Endothelial cell of umbilical vein (primary cell): ENCODE measurements at regions of chr12 and their contacts with region 1.

Region 1: DNA sequence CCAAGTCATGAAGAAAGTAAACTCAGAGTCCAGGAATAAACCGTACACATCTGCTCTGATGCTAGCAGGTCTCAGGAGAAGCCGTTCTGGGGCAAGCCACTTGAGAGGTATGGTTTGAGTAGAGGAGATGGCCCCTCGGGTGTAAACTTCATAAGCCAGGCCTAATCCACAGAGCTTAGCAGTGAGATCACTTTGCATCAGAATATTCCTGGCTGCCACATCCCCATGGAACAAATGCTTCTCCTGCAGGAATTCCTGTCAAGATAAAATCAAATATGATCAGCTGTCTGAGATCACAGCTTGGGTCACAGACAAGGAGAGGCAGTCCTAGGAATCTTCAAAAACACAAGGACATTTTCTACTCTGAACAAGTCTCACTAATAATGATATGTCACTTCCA is 11.2 kb upstream of the MAGOHB start:
- DNase-seq: no peak
- H3K4me3 ChIP-seq: no peak overlapping the region
- H3K27ac ChIP-seq: no peak overlapping the region
- H3K4me1 ChIP-seq: peaks cover 5% of the 10 kb centered on the region
- H3K27me3 ChIP-seq: no peaks in the 10 kb centered on the region
- CTCF ChIP-seq: no peak
- POLR2A ChIP-seq: no peak

Region 2: DNA sequence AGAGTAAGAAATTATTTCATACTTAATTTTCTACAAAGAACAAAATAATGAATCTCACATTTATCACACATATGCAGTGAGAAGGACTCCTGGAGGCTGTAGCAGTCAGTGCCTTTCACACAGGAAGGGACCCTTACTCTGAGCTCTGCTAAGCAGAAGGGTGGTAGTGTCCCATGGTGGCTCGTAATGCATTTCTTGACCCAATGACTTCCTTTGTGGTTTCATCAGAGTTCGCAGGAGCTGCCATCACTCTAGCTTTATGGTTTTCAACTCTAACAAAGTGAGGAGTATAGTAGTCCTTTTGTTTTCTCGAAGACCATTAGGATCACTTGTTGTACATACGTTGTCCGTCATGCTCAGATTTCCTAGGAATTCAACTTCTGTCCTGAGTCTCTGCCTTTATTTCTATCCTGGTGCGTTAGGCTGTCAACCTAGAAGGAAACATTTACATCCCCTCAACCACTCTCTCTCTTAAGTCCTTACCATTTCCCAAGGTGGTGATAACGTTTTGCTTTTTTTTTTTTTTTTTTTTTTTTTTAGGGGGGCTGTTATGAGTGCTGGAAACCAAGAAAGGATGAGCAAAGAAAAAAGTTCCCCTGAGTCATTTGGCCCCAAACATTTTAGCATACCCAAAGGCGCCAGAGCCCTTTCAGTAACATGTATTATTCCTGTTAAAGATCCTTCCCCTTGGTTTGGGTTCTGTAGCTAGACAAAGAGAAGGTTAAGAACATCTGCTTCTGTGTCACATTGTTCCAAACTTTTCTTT is 374.7 kb before region 1 on chr12:
- CTCF ChIA-PET with region 1: no interaction called
- POLR2A ChIA-PET with region 1: no interaction called
- dilution Hi-C with region 1: no loop called
- intact Hi-C with region 1: no loop called
- DNase-seq: no peak
- H3K4me3 ChIP-seq: no peak overlapping the region
- H3K27ac ChIP-seq: no peak overlapping the region
- H3K4me1 ChIP-seq: no peaks in the 10 kb centered on the region
- H3K27me3 ChIP-seq: no peaks in the 10 kb centered on the region
- CTCF ChIP-seq: no peak
- POLR2A ChIP-seq: no peak

Region 3: GRCh38 chr12:10613349-10614055 is 11.1 kb before region 1 on chr12 and contains the start of gene MAGOHB:
- CTCF ChIA-PET with region 1: no interaction called
- POLR2A ChIA-PET with region 1: no interaction called
- dilution Hi-C with region 1: no loop called
- intact Hi-C with region 1: no loop called
- DNase-seq: peak; percentile 95
- H3K4me3 ChIP-seq: peak within 1 kb of the TSS; percentile 58 to 96 (median 93)
- H3K27ac ChIP-seq: peak within 1 kb of the TSS; percentile 90
- H3K4me1 ChIP-seq: peaks cover 18% of the 10 kb centered on the region
- H3K27me3 ChIP-seq: no peaks in the 10 kb centered on the region
- CTCF ChIP-seq: no peak
- POLR2A ChIP-seq: peak; percentile 70
- total RNA-seq, gene MAGOHB: 45.4 and 48.3 TPM in 2 replicates

Region 4: GRCh38 chr12:10652192-10652591 is 27.6 kb after region 1 on chr12:
- CTCF ChIA-PET with region 1: no interaction called
- POLR2A ChIA-PET with region 1: no interaction called
- dilution Hi-C with region 1: no loop called
- intact Hi-C with region 1: loop called (anchors 1 kb)
- DNase-seq: no peak
- H3K4me3 ChIP-seq: no peak overlapping the region
- H3K27ac ChIP-seq: no peak overlapping the region
- H3K4me1 ChIP-seq: no peaks in the 10 kb centered on the region
- H3K27me3 ChIP-seq: no peaks in the 10 kb centered on the region
- CTCF ChIP-seq: no peak
- POLR2A ChIP-seq: no peak

Region 5: GRCh38 chr12:11264506-11264905 is 639.9 kb after region 1 on chr12:
- CTCF ChIA-PET with region 1: no interaction called
- POLR2A ChIA-PET with region 1: no interaction called
- dilution Hi-C with region 1: no loop called
- intact Hi-C with region 1: no loop called
- DNase-seq: no peak
- H3K4me3 ChIP-seq: no peak overlapping the region
- H3K27ac ChIP-seq: no peak overlapping the region
- H3K4me1 ChIP-seq: no peaks in the 10 kb centered on the region
- H3K27me3 ChIP-seq: peaks cover 0 to 2% of the 10 kb centered on the region in 2 experiments
- CTCF ChIP-seq: no peak
- POLR2A ChIP-seq: no peak